ENCODE measurements at regions of chr4 and their contacts with region 1.

Region 1: DNA sequence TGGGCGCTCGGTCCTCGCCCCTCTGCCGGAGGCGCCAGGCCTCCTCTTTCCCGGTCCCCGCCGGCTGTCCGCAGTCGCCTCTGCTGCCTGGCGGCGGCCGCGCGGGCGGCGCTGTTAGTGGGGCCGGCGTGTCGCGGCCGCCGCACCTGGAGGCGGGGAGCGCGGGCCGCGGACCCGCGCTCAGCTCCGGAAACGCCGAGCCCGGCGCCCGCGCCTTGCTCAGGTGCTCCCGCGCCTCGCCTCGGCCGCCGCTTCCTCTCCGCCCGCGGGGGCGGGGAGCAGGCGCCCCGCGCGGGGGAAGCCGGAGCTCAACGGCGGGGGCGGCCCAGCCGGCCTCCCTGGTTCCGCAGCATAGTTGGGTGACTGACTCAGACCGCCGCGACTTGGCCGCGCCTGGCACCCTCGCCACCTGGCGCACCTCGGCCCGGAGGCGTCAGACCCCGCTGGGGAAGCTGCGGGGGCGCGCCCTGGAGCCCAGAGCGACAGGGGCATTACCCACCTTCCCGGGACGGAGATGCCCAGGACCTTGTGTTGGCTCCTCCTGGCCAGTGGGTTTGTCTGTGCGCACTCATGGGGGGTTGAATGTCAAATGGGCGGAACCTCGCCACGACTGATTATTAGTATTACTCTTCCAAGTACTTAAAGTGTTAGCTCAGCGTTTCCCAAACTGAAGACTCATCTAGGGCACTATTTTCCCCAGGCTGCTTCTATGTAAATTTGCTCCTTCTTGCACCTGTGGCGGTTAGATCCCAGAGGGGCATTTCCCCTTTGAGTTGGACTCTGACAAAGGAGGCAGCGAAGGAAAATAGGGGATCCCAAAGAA is at the start of gene ARAP2:
- DNase-seq: no peak
- ATAC-seq: peak; percentile 72
- H3K4me3 ChIP-seq: peak within 1 kb of the TSS; percentile 84
- H3K27ac ChIP-seq: peak within 1 kb of the TSS; percentile 88
- H3K4me1 ChIP-seq: no peaks in the 10 kb centered on the region
- H3K27me3 ChIP-seq: no peaks in the 10 kb centered on the region
- CTCF ChIP-seq: peak in 1 of 3 experiments; percentile 12; a peak in 1 of 6 replicates
- EP300 ChIP-seq: no peak
- POLR2A ChIP-seq: peak; percentile 66; the same call in 1 of the 2 replicates
- RAD21 ChIP-seq: 0 out of 2 replicates have a peak, but pooled peaks have one; percentile 10
- polyA plus RNA-seq, gene ARAP2: 5.4 to 5.7 TPM

Region 2: DNA sequence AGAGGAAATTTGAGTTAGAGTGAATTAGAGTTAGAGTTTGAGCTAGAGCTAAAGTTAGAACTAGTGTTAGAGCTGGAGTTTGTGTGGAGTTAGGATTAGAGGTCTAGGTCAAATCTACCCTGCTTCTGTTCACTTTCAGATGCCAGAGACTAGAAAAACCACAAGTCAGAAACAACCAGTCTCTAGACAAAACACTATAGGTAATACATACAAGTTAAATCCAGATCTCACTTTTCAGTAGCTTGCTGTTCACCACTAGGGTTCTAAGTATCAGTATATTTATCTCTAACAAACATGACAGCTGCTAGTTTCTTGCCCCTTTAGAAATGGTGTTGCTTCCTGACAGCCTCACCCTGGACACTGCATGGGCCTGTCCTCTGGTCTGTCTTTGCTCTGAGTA is 300.9 kb before region 1 on chr4:
- CTCF ChIA-PET with region 1: no interaction called
- POLR2A ChIA-PET with region 1: no interaction called
- RAD21 ChIA-PET with region 1: no interaction called
- SMC1A ChIA-PET with region 1: no interaction called
- in situ Hi-C with region 1: no loop called
- intact Hi-C with region 1: no loop called
- DNase-seq: no peak
- ATAC-seq: no peak; the same call in 1 of the 3 replicates
- H3K4me3 ChIP-seq: no peak overlapping the region
- H3K27ac ChIP-seq: no peak overlapping the region
- H3K4me1 ChIP-seq: no peaks in the 10 kb centered on the region
- H3K27me3 ChIP-seq: no peaks in the 10 kb centered on the region
- CTCF ChIP-seq: no peak
- EP300 ChIP-seq: no peak
- POLR2A ChIP-seq: no peak
- RAD21 ChIP-seq: no peak

Region 3: GRCh38 chr4:36192922-36193321 is 51.5 kb before region 1 on chr4:
- CTCF ChIA-PET with region 1: interaction called, 7 read pairs
- POLR2A ChIA-PET with region 1: interaction called, 3 read pairs
- RAD21 ChIA-PET with region 1: interaction called, 11 read pairs
- SMC1A ChIA-PET with region 1: interaction called, 21 read pairs
- in situ Hi-C with region 1: no loop called
- intact Hi-C with region 1: no loop called
- DNase-seq: no peak
- ATAC-seq: no peak
- H3K4me3 ChIP-seq: no peak overlapping the region
- H3K27ac ChIP-seq: no peak overlapping the region
- H3K4me1 ChIP-seq: peaks cover 4% of the 10 kb centered on the region; the same call in 1 of the 2 replicates
- H3K27me3 ChIP-seq: no peaks in the 10 kb centered on the region
- CTCF ChIP-seq: no peak
- EP300 ChIP-seq: no peak
- POLR2A ChIP-seq: no peak
- RAD21 ChIP-seq: no peak

Region 4: GRCh38 chr4:36230534-36230933 is 13.9 kb before region 1 on chr4:
- CTCF ChIA-PET with region 1: interaction called, 3 read pairs
- POLR2A ChIA-PET with region 1: interaction called, 10 read pairs
- RAD21 ChIA-PET with region 1: interaction called, 16 read pairs
- SMC1A ChIA-PET with region 1: interaction called, 16 read pairs
- in situ Hi-C with region 1: no loop called
- intact Hi-C with region 1: no loop called
- DNase-seq: no peak
- ATAC-seq: no peak
- H3K4me3 ChIP-seq: no peak overlapping the region
- H3K27ac ChIP-seq: no peak overlapping the region
- H3K4me1 ChIP-seq: no peaks in the 10 kb centered on the region
- H3K27me3 ChIP-seq: no peaks in the 10 kb centered on the region
- CTCF ChIP-seq: no peak
- EP300 ChIP-seq: no peak
- POLR2A ChIP-seq: no peak
- RAD21 ChIP-seq: no peak

Region 5: DNA sequence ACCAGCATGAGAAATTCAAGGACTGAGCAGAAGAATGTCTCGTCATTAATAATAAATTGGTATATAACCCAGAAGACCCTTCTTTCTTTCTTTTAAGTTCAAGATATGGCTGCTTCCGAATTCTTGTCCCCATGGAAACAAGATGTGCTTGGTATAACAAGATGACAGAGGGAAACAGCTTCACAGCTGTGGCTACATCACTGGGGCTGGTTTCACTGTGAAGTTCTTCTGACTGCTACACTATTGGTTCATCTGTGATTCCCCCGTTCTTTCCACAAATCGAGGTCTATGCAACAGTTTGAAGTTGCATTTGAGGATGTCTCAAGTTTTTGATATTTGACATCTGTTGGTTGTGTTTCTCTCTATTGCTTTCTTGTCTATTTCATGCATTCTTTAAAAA is 24.6 kb after region 1 on chr4:
- CTCF ChIA-PET with region 1: interaction called, 5 read pairs
- POLR2A ChIA-PET with region 1: no interaction called
- RAD21 ChIA-PET with region 1: interaction called, 5 read pairs
- SMC1A ChIA-PET with region 1: interaction called, 10 read pairs
- in situ Hi-C with region 1: no loop called
- intact Hi-C with region 1: no loop called
- DNase-seq: no peak
- ATAC-seq: peak; percentile 84
- H3K4me3 ChIP-seq: no peak overlapping the region
- H3K27ac ChIP-seq: no peak overlapping the region
- H3K4me1 ChIP-seq: no peaks in the 10 kb centered on the region
- H3K27me3 ChIP-seq: no peaks in the 10 kb centered on the region
- CTCF ChIP-seq: no peak
- EP300 ChIP-seq: no peak
- POLR2A ChIP-seq: no peak
- RAD21 ChIP-seq: no peak

Region 6: DNA sequence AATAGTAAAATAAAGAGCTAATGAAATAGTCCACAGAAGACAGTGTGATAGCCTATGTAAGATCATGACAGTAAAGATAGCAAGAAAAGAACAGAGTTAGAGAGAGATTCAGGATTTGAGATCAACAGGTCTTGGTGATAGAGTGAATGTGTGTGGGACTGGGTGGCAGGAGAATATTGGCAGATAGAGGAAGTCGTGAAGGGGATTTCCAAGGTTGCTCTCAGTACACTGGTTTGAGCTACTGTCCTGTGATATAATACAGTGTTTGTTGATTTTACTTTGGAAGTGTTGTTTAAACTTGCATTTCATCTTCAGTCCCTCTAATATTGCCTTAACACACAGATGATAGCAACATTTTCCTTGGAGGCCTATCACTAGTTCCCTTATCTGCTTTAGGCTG is 81.0 kb after region 1 on chr4:
- CTCF ChIA-PET with region 1: interaction called, 7 read pairs
- POLR2A ChIA-PET with region 1: interaction called, 7 read pairs
- RAD21 ChIA-PET with region 1: interaction called, 24 read pairs
- SMC1A ChIA-PET with region 1: interaction called, 15 read pairs
- in situ Hi-C with region 1: loop called (anchors 5 kb)
- intact Hi-C with region 1: loop called (anchors 1 kb)
- DNase-seq: peak; percentile 59
- ATAC-seq: peak; percentile 92
- H3K4me3 ChIP-seq: no peak overlapping the region
- H3K27ac ChIP-seq: peak overlapping the region; percentile 93
- H3K4me1 ChIP-seq: peaks cover 57% of the 10 kb centered on the region
- H3K27me3 ChIP-seq: no peaks in the 10 kb centered on the region
- CTCF ChIP-seq: no peak
- EP300 ChIP-seq: 0 out of 4 replicates have a peak, but pooled peaks of 1 of the 2 experiments have one; percentile 16
- POLR2A ChIP-seq: no peak
- RAD21 ChIP-seq: no peak

Region 7: DNA sequence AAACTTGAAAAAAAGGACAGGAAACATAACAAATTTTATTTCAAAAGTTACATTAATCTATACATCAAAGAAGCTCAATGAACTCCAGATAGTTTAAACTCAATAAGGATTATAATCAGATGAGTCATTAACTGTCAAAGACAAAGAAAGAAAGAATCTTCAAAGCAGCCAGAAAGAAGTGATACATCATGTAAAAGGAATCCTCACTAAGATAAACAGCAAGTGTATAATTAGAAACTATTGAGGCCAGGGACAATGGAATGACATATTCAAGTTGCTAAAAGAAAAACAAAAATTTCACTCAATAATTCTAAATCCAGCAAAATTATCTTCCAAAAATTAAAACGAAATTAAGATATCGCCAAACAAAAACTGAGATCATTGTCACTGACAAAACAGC is 838.4 kb after region 1 on chr4:
- CTCF ChIA-PET with region 1: no interaction called
- POLR2A ChIA-PET with region 1: no interaction called
- RAD21 ChIA-PET with region 1: no interaction called
- SMC1A ChIA-PET with region 1: no interaction called
- in situ Hi-C with region 1: no loop called
- intact Hi-C with region 1: no loop called
- DNase-seq: no peak
- ATAC-seq: no peak
- H3K4me3 ChIP-seq: no peak overlapping the region
- H3K27ac ChIP-seq: no peak overlapping the region
- H3K4me1 ChIP-seq: no peaks in the 10 kb centered on the region
- H3K27me3 ChIP-seq: no peaks in the 10 kb centered on the region
- CTCF ChIP-seq: no peak
- EP300 ChIP-seq: no peak
- POLR2A ChIP-seq: no peak
- RAD21 ChIP-seq: no peak

Region 8: DNA sequence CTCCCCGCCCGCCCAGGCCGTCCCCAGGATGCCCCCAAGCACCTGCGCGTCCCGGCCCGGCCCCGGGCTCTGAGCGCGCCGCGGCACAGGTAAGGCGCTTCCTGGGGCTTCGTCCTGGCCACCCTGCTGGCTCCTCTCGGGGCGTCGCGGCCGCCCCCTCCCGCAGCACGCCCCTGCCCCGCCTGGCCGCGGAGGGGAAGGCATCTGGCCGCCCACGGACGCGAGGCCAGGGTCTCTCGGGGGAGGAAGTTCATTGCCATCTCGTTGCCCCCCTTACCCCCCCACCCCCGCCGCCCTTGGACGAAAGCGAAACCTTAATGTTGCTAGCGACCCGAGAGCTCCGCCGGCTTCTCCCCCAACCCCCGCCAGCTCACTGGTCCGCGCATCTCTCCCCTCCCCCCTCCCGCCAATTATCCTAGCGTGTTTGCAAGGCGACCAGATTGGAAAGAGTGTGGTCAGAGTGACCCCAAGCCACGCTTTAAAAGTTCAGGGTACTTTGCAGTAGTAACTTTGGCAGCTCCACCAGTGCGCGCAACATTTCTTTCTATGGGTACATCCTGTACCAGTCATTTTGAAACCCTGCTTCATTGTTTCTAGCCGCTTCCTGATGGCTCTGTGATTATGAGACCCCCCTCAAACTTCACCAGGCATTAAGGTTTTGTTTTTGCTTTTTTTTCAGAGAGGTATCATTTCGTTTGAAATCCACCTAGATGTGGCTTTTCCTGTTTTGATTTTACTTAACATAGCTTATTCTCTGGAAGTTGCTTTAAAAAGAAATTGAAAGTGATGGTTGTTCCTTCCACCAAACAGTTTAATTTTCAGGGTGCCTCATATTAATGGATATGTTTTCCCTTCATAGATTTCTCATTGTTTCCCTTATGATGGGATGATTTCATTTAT is 1647.0 kb after region 1 on chr4:
- CTCF ChIA-PET with region 1: no interaction called
- POLR2A ChIA-PET with region 1: no interaction called
- RAD21 ChIA-PET with region 1: no interaction called
- SMC1A ChIA-PET with region 1: no interaction called
- in situ Hi-C with region 1: no loop called
- intact Hi-C with region 1: loop called (anchors 5 kb)
- DNase-seq: peak; percentile 79
- ATAC-seq: peak; percentile 69
- H3K4me3 ChIP-seq: peak overlapping the region; percentile 59
- H3K27ac ChIP-seq: peak overlapping the region; percentile 70
- H3K4me1 ChIP-seq: peaks cover 18% of the 10 kb centered on the region
- H3K27me3 ChIP-seq: no peaks in the 10 kb centered on the region
- CTCF ChIP-seq: peak in 1 of 3 experiments; percentile 15; a peak in 1 of 6 replicates
- EP300 ChIP-seq: peak in 1 of 2 experiments; percentile 70; a peak in 1 of 4 replicates
- POLR2A ChIP-seq: peak; percentile 72
- RAD21 ChIP-seq: no peak